IMR-90 (cell line): ENCODE measurements at regions of chr3 and their contacts with region 1.

Region 1: DNA sequence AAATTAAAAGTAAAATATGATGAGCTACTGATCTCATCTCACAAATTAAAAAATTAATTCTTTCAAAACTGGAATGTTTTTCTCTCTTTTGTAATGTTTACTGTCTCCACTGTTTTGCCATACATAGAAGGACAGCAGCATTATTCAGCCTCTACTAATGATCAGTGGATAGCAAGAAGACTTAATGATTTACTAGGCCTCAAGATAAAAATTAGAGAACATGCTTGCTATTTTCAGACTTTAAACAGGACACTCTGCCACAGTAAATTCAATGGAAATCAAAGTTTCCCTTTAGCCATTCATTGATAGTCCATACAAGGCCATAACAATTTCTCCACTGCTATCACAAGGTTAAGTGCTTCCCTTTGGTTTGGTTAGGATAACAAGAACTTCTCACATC is 129.4 kb downstream of the TMCC1 start:
- DNase-seq: no peak
- ATAC-seq: no peak
- H3K4me3 ChIP-seq: no peak overlapping the region
- H3K27ac ChIP-seq: no peak overlapping the region
- H3K4me1 ChIP-seq: no peaks in the 10 kb centered on the region
- H3K27me3 ChIP-seq: no peaks in the 10 kb centered on the region
- CTCF ChIP-seq: no peak
- POLR2A ChIP-seq: no peak
- RAD21 ChIP-seq: no peak

Region 2: GRCh38 chr3:129749692-129750091 is 14.4 kb before region 1 on chr3:
- CTCF ChIA-PET with region 1: no interaction called
- POLR2A ChIA-PET with region 1: interaction called, 11 read pairs
- dilution Hi-C with region 1: no loop called
- in situ Hi-C with region 1: no loop called
- intact Hi-C with region 1: no loop called
- DNase-seq: no peak
- ATAC-seq: no peak
- H3K4me3 ChIP-seq: no peak overlapping the region
- H3K27ac ChIP-seq: no peak overlapping the region
- H3K4me1 ChIP-seq: peaks cover 3% of the 10 kb centered on the region; the same call in 1 of the 2 replicates
- H3K27me3 ChIP-seq: no peaks in the 10 kb centered on the region
- CTCF ChIP-seq: no peak
- POLR2A ChIP-seq: no peak
- RAD21 ChIP-seq: no peak

Region 3: DNA sequence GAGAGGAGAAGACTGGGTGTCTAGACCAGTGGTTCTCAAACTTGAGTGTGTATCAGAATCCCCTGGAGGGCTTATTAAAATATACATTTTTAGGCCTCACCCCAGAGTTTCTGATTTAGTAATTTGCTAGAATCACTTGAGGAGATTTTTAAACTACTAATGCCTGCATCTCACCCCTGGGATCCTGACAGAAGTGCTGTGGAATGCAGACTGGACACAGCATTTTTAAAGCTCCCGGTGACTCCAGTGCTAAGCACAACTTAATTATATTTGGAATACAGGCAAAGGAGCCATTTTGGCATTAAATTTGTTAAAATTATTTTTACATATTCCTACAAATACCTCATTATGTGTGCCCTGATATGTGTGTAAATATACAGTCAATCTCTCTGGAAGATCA is 726.2 kb after region 1 on chr3:
- CTCF ChIA-PET with region 1: no interaction called
- POLR2A ChIA-PET with region 1: no interaction called
- dilution Hi-C with region 1: no loop called
- in situ Hi-C with region 1: no loop called
- intact Hi-C with region 1: no loop called
- DNase-seq: no peak
- ATAC-seq: 0 out of 2 replicates have a peak, but pooled peaks have one; percentile 32
- H3K4me3 ChIP-seq: no peak overlapping the region
- H3K27ac ChIP-seq: no peak overlapping the region
- H3K4me1 ChIP-seq: no peaks in the 10 kb centered on the region
- H3K27me3 ChIP-seq: no peaks in the 10 kb centered on the region
- CTCF ChIP-seq: no peak
- POLR2A ChIP-seq: no peak
- RAD21 ChIP-seq: no peak